ENCODE measurements at regions of chr6 and their contacts with region 1.

Region 1: GRCh38 chr6:11251541-11252360 is 19.3 kb upstream of the NEDD9 start:
- DNase-seq: peak; percentile 86
- ATAC-seq: peak; percentile 63
- H3K4me3 ChIP-seq: no peak overlapping the region
- H3K27ac ChIP-seq: peak overlapping the region; percentile 74
- H3K4me1 ChIP-seq: peaks cover 39% of the 10 kb centered on the region
- H3K27me3 ChIP-seq: no peaks in the 10 kb centered on the region
- CTCF ChIP-seq: no peak

Region 2: GRCh38 chr6:11270030-11271027 is 18.6 kb after region 1 on chr6:
- CTCF ChIA-PET with region 1: no interaction called
- POLR2A ChIA-PET with region 1: no interaction called
- intact Hi-C with region 1: loop called (anchors 2 kb)
- DNase-seq: no peak
- ATAC-seq: no peak
- H3K4me3 ChIP-seq: no peak overlapping the region
- H3K27ac ChIP-seq: no peak overlapping the region
- H3K4me1 ChIP-seq: peaks cover 28% of the 10 kb centered on the region
- H3K27me3 ChIP-seq: no peaks in the 10 kb centered on the region
- CTCF ChIP-seq: no peak

Measured in PC-3 (cell line).